ENCODE measurements at regions of chr10 and their contacts with region 1.

Region 1: GRCh38 chr10:46228563-46229071 is 58.2 kb upstream of the ANTXRL start:
- DNase-seq: peak; percentile 46
- H3K4me3 ChIP-seq: no peak overlapping the region
- H3K27ac ChIP-seq: no peak overlapping the region
- H3K4me1 ChIP-seq: no peaks in the 10 kb centered on the region
- H3K27me3 ChIP-seq: no peaks in the 10 kb centered on the region
- CTCF ChIP-seq: peak; percentile 95 to 96

Region 2: DNA sequence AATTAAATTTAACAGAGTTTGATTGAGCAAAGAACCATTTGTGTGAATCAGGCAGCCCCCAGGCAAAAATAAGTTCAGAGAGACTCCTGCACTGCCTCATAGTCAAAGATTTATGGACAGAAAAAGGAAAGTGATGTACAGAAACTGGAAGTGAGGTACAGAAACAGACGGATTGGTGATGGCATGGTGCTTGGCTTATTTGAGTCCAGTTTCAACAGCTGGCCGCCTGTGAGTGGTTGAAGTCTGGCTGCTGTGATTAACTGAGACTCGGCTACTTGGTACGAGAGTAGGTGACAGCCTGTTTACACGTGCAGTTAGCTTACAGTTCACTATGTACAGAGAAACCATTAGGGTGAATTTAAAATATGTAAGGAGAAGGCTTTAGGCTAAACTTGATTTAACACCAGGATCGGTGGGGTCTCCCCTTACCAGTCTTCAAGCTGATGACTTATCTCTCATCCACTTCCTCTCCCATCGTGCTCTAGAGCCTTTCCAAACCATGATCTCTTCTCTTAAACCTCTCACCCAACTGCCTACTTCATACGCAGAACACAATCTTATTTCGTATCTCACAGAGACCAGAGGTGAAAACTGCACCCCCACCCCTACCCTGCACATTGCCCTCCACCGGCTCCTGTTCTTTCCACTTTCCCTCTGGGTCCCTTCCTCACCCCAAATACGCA is 177.5 kb before region 1 on chr10:
- CTCF ChIA-PET with region 1: no interaction called
- dilution Hi-C with region 1: no loop called
- in situ Hi-C with region 1: no loop called
- intact Hi-C with region 1: no loop called
- DNase-seq: peak; percentile 33
- H3K4me3 ChIP-seq: no peak overlapping the region
- H3K27ac ChIP-seq: no peak overlapping the region
- H3K4me1 ChIP-seq: no peaks in the 10 kb centered on the region
- H3K27me3 ChIP-seq: no peaks in the 10 kb centered on the region
- CTCF ChIP-seq: no peak

Region 3: DNA sequence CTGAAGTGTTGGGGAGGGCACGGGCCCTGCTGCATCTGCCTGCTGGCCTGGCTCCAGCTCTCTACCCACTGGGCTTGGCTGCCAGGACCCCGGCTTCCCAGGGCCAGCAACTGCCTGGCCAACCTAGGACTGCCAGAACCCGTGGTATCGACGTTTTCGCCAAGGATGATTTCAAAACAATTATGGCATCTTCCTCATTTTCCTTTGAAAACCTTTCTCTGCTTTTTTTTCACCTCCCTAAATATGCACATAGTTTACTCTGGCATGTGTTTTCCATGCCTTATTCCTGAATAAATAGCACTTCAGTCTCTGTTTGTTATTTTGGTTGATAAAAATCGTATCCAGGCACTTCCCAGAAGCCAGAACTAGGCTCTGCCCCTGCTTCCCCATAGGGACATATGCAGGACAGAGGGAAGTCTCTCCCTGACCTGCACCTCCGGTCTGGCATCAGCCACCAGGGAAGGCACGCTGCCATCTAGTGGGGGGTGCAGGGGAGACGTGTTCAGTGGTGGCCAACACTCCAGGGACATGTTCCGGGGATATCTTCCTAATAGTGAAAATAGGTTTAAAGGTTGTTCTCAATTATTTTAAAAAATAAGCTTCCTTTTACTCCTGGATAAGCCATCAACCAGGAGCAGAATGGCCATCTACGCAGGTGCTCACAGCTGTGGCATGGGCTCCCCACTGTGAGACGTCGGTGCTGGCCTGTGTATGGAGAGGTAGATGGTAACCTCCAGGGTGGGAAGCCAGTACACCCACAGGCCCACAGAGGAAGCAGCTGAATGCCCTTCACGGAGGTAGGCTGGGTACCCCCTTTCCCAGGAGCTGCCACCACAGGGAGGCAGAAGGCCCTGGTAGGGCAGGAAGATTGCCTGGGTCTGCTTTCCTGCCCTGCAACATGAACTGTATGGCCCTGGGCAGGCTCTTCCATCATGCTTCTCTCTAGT is 27.5 kb after region 1 on chr10:
- CTCF ChIA-PET with region 1: no interaction called
- dilution Hi-C with region 1: no loop called
- in situ Hi-C with region 1: no loop called
- intact Hi-C with region 1: loop called (anchors 2 kb)
- DNase-seq: peak; percentile 40
- H3K4me3 ChIP-seq: no peak overlapping the region
- H3K27ac ChIP-seq: no peak overlapping the region
- H3K4me1 ChIP-seq: peaks cover 4% of the 10 kb centered on the region
- H3K27me3 ChIP-seq: no peaks in the 10 kb centered on the region
- CTCF ChIP-seq: peak; percentile 60 to 73

Region 4: DNA sequence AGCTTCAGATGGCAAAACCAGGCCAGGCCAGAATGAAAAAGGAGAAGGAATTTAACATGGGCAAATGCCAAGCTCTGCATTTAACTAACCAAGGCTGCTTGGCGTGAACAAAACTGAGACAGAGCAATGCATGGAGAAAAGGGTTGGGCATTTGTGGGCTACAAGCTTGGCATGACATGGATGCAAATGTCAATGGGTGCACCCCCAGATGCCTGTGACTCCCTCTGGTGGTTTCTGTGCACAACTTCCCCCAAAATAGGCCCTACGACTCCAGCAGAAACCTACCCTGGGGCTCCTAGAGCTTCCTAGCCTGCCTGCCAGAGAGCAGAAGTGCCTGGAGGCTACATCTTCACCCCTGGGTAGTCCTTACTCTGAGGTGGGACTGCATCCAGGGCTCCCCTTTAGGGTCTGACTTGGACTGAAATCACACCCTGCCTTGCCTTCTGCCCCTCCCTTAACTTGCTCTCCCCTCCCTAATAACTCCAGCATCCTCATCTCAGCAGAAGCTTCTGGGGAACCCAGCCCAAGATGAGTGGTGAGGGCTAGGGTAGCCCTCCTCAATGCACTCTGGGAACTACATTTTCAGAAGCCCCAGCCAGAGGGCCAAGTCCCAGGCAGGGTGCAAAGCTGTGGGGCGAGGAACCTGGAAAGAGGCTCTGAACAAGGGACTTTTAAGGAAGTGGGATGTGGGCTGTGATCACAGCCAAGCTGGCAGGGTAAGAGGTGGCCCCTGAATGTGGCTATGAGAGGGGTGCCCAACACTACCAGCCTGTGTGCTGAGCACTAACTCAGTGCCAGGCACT is 316.6 kb after region 1 on chr10:
- CTCF ChIA-PET with region 1: no interaction called
- dilution Hi-C with region 1: no loop called
- in situ Hi-C with region 1: loop called in 1 of 2 experiments (anchors 25 kb)
- intact Hi-C with region 1: loop called (anchors 10 kb)
- DNase-seq: peak; percentile 44
- H3K4me3 ChIP-seq: no peak overlapping the region
- H3K27ac ChIP-seq: no peak overlapping the region
- H3K4me1 ChIP-seq: no peaks in the 10 kb centered on the region
- H3K27me3 ChIP-seq: no peaks in the 10 kb centered on the region
- CTCF ChIP-seq: peak; percentile 61 to 70